HEK293 (cell line): ENCODE measurements at regions of chr10 and their contacts with region 1.

Region 1: DNA sequence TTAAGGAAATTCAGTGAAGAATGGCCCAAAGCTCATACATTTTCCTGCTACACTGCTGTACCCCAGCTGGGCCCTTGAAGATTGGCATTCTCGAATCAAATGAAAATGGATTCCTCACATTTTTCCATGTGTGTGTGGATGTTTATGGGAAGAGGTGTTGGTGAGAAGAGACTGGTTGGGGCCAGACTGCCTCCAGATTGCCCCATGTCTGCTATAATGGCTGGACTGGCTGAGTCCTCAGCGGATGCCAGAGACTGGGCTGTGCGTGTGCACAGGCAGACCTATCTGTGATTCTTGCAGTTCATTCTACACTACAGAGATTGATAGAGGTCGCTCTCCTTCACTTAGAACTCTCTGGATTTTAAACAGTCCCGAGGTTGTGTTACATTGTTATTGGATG is 183.6 kb upstream of the GDF10 start:
- H3K4me3 ChIP-seq: no peak overlapping the region
- H3K27ac ChIP-seq: no peak overlapping the region
- H3K4me1 ChIP-seq: no peaks in the 10 kb centered on the region
- CTCF ChIP-seq: no peak

Region 2: DNA sequence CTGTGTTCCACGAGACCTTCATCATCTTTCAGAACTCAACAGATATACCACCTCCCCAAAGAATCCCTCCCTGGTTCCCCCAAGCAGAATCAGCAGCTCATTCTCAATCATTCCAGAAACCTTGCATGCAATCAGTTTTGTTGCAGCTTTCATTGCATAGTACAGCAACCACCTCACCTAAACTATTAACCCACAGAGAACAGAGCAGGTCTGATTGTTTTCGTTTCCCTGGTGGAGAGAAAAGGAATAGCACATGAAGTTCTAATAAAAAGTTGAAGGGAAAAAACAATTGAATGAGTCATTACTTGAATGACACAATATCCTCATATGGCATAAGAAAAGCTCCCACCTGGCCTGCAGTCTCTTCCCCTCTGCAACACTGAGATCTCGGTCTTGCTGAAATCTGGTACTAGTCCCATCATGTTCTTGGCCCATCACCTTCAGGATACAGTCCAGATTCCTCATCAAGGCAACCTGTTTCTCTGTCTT is 36.5 kb after region 1 on chr10:
- CTCF ChIA-PET with region 1: interaction called, 12 read pairs
- POLR2A ChIA-PET with region 1: no interaction called
- H3K4me3 ChIP-seq: no peak overlapping the region
- H3K27ac ChIP-seq: no peak overlapping the region
- H3K4me1 ChIP-seq: no peaks in the 10 kb centered on the region
- CTCF ChIP-seq: no peak

Region 3: DNA sequence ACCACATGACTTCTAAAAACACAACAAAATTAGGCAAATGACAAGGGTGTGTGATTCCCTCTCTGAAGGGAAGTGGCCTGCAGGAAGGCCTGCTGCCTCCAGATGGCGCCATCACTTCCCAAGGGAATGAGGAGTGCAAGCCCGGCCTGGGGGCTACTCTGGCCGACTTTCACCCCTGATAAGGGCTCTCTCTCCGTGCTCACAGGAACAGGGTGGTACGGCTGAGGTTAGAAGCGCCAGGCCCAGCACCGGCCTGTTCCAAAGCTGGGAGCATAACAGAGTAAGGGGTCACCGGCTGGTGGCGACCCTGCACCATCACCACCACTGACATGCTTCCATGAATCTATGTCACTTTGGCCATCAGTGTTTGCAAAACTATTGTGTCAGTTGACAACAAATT is 244.8 kb after region 1 on chr10:
- CTCF ChIA-PET with region 1: no interaction called
- POLR2A ChIA-PET with region 1: no interaction called
- H3K4me3 ChIP-seq: no peak overlapping the region
- H3K27ac ChIP-seq: no peak overlapping the region
- H3K4me1 ChIP-seq: no peaks in the 10 kb centered on the region
- CTCF ChIP-seq: peak; percentile 58